Posterior vena cava (tissue), 2 donors: ENCODE measurements at regions of chr1 and their contacts with region 1.

Region 1: GRCh38 chr1:55364216-55364615 is 149.1 kb upstream of the USP24 start:
- DNase-seq: no peak

Region 2: GRCh38 chr1:55277377-55278130 is 86.7 kb before region 1 on chr1:
- intact Hi-C with region 1: no loop called
- DNase-seq: peak; percentile 93

Region 3: GRCh38 chr1:55425310-55425930 is 61.2 kb after region 1 on chr1:
- intact Hi-C with region 1: loop called in 1 of 2 experiments (anchors 2 kb)
- DNase-seq: no peak